Vagina (tissue), 2 donors: ENCODE measurements at regions of chr7 and their contacts with region 1.

Region 1: GRCh38 chr7:6228361-6229229 is 43.8 kb downstream of the CYTH3 start:
- DNase-seq: no peak
- H3K4me3 ChIP-seq: no peak overlapping the region
- H3K27ac ChIP-seq: peak overlapping the region; percentile 68
- H3K4me1 ChIP-seq: peaks cover 58% of the 10 kb centered on the region
- H3K27me3 ChIP-seq: no peaks in the 10 kb centered on the region
- CTCF ChIP-seq: no peak
- POLR2A ChIP-seq: no peak

Region 2: DNA sequence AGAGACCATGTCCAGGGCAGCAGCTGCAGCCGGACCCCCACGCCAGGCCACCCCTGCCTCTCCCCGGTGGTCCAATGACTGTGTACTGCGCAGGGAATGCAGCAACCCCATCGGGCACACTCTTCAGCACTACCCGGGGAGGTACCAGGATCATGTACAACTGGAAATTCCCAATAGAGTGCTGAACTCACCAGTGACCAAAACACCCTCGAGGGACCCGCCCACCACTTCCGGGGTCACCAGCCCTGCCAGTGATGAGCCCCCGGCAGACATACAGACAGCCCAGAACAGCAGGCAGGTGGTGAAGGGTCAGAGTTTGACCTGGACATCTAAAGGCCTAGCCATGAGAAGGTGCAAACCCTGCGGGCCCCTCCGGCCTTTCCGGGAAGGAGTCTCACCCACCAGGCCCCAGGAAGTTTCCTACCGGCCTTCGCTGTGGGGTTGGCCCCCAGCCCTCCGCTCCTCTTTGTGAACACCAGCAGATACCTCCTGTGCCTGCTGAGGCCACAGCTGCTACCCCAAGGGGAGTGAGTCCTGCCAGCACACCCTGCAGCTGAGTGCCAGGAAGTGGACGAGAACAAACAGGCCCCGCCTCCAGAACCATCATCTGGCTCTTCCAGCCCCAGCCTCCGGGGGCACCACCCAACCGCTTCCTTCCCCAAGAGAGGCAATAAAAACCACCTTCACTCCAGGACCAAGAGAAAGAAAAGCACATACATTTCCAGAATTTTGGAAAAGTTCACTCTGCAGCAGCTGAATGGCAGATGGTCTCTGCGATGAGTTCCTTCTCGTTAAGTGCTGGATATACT is 202.4 kb before region 1 on chr7:
- intact Hi-C with region 1: no loop called
- DNase-seq: no peak
- H3K4me3 ChIP-seq: peak overlapping the region in 1 of 2 donors; percentile 16
- H3K27ac ChIP-seq: no peak overlapping the region
- H3K4me1 ChIP-seq: no peaks in the 10 kb centered on the region
- H3K27me3 ChIP-seq: no peaks in the 10 kb centered on the region
- CTCF ChIP-seq: no peak
- POLR2A ChIP-seq: no peak

Region 3: GRCh38 chr7:6172224-6172923 is 56.2 kb before region 1 on chr7:
- intact Hi-C with region 1: loop called (anchors 2 kb)
- DNase-seq: no peak
- H3K4me3 ChIP-seq: no peak overlapping the region
- H3K27ac ChIP-seq: no peak overlapping the region
- H3K4me1 ChIP-seq: no peaks in the 10 kb centered on the region
- H3K27me3 ChIP-seq: no peaks in the 10 kb centered on the region
- CTCF ChIP-seq: no peak
- POLR2A ChIP-seq: no peak

Region 4: DNA sequence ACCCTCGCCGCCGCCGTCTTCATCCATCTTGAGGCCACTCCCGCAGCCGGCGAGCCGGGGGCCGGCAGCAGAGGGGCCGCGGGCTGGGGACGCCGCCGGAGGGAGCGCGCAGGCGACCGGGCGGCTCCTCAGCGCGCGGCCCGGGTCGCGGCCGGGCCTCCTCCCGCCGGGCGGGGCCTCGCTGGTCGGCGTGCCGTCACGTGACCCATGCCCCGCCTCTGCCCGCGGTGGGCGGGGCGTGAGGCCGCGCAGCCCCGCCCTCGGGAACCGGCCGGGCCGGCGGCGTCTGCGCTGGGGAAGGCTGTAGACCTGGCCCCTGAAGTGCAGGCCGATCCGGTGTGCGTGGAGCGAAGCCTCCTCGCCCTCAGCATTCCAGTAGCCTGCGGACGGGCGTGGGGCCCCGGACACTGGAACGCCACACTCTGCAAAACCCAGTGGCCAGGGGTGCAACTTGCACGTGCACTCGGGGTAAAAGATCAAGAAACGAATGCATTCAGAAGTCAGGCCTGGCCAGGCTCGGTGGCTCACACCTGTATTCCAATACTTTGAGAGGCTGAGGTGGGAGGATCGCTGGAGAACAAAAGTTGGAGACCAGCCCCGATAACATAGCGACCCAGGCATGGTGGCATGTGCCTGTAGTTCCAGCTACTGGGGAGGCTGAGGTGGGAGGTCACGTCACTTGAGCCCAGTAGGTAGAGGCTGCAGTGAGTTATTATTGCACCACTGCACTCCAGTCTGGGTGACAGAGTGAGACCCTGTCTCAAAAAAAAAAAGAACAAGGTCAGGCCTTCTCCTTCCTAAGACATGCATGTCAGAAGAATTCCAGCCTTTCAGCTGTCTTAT is 44.1 kb after region 1 on chr7 and contains the start of gene CYTH3:
- intact Hi-C with region 1: loop called (anchors 5 kb)
- DNase-seq: no peak
- H3K4me3 ChIP-seq: peak within 1 kb of the TSS; percentile 93 to 95
- H3K27ac ChIP-seq: peak within 1 kb of the TSS; percentile 91
- H3K4me1 ChIP-seq: peaks cover 26% of the 10 kb centered on the region
- H3K27me3 ChIP-seq: no peaks in the 10 kb centered on the region
- CTCF ChIP-seq: no peak
- POLR2A ChIP-seq: peak in 1 of 2 donors; percentile 88
- total RNA-seq, gene CYTH3: 29.5 TPM